ENCODE measurements at regions of chrX and their contacts with region 1.

Region 1: GRCh38 chrX:19964017-19964710 is 26.7 kb downstream of the BCLAF3 start:
- DNase-seq: no peak
- ATAC-seq: no peak
- H3K4me3 ChIP-seq: no peak overlapping the region
- H3K27ac ChIP-seq: no peak overlapping the region
- H3K4me1 ChIP-seq: no peaks in the 10 kb centered on the region
- H3K27me3 ChIP-seq: peaks cover 0 to 8% (median 0%) of the 10 kb centered on the region in 3 donors
- CTCF ChIP-seq: no peak

Region 2: DNA sequence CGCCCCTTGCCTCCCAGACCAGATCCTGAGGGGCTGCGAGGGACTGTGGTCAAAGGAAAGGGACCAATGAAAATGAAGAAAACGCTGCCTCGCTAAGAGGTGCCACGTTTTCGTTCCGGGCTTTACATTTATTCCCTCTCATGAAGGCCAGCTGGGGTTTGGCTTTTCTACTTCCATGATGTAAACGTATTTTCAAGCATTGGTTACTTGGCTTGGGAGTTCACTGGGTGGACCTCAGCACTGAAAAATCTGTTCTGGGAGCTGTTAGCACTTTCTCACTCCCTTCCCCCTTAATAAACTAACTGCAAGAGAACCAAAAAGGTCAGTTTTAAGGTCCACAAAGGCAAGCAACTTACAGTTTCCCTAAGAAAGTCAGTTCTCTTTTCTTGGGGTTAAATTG is 801.3 kb before region 1 on chrX:
- intact Hi-C with region 1: loop called in 1 of 2 experiments (anchors 10 kb)
- DNase-seq: no peak
- ATAC-seq: no peak
- H3K4me3 ChIP-seq: no peak overlapping the region
- H3K27ac ChIP-seq: no peak overlapping the region
- H3K4me1 ChIP-seq: no peaks in the 10 kb centered on the region
- H3K27me3 ChIP-seq: no peaks in the 10 kb centered on the region
- CTCF ChIP-seq: no peak